Left cardiac atrium (tissue), 4 donors: ENCODE measurements at regions of chr13 and their contacts with region 1.

Region 1: GRCh38 chr13:52128714-52129700 is at the start of gene NEK5:
- DNase-seq: peak; percentile 74
- ATAC-seq: peak; percentile 86 to 93
- total RNA-seq, gene NEK5: 0.44 TPM

Region 2: DNA sequence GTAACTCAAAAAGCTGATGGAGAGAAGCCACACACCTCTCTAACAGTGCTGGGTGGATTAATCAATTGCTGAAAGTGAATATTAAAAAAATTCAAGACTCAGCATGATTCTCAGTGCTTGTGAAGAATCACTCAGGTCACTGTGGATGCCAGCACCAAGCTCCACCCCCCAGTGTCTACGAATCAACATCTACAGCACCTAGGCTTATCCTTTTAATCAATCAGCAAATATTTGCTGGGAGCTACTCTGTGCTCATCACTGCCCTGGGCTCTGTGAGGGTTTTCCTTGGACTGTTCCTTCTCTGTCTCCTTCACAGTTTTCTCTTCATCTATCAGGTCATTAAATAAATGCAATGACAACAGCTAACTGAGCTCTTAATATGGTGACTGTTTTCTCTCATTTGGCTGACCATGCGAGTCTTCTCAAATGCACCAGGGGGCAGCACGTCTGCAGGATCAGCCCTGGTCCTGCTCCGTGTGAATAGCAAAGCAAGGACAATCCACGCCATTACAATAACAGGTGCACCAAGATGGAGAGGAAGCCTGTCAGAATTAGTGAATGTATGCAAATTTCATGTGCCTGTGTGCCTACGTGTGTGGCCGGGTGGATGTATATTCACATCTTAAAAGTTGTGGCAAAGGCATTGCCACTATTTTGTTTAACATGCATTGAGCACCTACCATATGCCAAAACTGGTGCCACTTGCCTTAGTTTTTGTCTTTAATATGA is 1003.3 kb before region 1 on chr13:
- intact Hi-C with region 1: loop called in 1 of 2 experiments (anchors 10 kb)
- DNase-seq: peak; percentile 43
- ATAC-seq: peak; percentile 67 to 75

Region 3: GRCh38 chr13:51814825-51815650 is 314.0 kb before region 1 on chr13:
- intact Hi-C with region 1: loop called in 1 of 2 experiments (anchors 10 kb)
- DNase-seq: peak; percentile 56
- ATAC-seq: peak; percentile 66 to 67

Region 4: DNA sequence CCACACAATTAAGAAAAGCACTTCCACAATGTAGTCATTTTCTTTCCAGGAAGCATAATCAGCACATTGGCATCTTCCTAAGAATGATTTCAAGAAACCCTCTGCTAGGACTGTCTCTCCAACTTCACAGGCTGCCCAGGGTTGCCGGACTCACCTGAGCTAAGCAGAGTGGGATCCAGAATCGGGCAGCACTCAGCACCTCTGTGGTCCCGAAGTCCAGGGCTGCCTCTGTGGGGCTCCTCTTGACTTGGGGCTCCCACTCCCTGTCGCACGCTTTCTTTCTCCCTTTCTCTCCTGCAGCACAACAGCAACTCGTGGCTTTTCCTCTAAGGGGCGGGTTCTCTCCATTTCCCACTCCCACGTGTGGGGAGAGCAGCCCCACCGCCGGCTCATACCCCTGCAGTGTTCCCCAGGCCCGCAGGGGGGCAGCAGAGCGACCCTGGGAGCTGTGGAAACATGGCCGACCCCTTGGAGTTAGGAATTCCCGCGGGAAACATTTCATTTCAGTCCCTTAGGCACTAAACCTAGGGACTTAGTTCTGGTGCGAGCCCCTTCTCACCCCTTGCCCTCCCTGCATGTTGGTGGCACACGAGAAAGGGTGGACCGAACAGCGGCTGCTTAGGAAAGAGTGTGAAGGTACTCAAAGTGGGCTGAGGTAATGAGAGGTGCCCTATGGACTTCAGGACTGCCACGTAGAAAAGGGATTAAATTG is 284.0 kb before region 1 on chr13 and contains the start of gene TMEM272:
- intact Hi-C with region 1: loop called in 1 of 2 experiments (anchors 10 kb)
- DNase-seq: peak; percentile 61
- ATAC-seq: peak; percentile 84 to 90
- total RNA-seq, gene TMEM272: 0.68 to 1.4 TPM

Region 5: DNA sequence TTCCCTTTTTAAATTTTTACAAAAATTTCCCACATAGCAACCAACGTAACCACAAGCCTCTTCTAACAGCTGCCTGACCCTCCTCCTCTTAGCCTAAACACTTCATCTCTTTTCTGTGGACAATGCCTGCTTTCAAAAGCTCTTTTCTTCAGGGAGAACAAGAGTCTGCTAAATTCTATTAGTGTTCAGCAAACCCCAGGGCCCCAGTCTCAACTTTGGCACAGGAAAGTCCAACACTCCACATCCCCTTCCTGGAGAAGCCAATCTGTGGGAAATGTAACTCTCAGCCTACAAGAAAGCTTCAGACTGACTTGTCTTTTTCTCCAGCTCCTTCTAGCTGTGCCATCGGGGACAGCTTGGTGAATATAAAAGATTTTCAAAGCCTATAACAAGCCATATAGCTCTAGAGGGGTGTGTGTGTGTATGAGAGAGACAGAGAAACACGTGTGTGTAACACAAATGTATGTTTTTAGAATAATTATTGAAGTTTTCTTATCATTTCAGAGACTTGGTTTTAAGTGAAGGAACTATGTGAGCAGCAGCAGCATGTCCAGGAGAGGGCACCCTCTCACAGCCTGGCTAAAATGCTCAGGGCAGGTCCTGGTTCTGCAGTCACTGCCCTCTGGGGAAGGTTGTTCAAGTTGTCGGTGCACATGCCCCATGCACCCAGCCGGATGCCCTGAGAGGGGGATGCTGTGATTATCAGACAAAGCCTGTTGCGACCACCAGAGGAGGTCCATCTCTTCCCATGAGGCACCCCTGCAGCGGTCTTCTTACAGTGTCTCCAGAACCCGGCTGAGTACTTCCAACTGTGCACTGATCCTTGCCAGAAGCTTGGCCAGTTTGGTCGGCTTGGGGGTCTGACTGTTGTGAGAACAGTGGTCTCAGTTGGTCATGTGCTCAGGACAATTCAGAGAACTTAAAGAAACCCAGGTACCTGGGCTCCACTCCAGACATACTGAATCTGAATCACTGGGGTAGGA is 232.8 kb before region 1 on chr13:
- intact Hi-C with region 1: loop called (anchors 2 to 10 kb)
- DNase-seq: peak; percentile 48
- ATAC-seq: peak; percentile 85 to 89

Region 6: DNA sequence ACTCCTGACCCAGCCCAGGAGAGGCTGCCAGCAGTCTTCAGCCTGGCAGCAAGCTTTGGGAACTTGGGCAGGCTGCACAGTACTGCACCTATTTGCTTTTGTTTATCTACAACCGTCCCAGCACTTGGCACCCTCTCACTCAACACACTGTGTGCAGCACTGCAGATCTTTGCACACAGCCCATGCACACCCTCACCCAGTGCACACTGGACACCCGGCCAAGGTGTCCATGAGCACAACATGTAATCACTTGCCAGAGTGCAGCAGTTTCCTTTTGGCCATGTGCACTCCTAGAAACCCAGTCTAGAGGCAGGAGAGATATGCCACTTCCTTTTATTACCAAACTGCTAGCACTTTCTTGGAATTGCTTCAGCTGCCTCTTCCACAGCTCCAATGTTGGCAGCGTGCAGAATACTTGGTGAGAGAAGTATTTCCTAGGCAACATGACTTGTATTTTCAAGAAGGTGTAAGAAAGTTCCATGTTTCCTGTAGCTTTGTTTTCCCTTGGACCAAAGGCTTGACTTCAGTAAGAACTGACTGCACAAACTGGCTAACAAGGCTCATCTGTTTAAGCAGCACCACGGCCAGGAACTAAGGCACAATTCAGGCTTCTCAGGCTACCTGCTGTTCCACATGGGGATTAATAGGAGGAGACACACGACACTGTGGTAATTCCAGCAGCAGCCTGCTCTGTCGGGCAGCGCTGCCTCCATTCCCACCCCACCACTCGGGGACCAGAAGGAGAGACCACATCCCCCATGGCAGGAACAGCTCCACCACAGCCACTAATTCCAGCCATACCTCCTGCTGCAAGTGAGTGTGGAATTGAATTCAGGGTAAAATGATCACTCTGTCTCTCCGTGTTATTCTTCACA is 133.1 kb before region 1 on chr13:
- intact Hi-C with region 1: loop called (anchors 5 kb)
- DNase-seq: peak; percentile 25
- ATAC-seq: peak; percentile 76 to 86

Region 7: DNA sequence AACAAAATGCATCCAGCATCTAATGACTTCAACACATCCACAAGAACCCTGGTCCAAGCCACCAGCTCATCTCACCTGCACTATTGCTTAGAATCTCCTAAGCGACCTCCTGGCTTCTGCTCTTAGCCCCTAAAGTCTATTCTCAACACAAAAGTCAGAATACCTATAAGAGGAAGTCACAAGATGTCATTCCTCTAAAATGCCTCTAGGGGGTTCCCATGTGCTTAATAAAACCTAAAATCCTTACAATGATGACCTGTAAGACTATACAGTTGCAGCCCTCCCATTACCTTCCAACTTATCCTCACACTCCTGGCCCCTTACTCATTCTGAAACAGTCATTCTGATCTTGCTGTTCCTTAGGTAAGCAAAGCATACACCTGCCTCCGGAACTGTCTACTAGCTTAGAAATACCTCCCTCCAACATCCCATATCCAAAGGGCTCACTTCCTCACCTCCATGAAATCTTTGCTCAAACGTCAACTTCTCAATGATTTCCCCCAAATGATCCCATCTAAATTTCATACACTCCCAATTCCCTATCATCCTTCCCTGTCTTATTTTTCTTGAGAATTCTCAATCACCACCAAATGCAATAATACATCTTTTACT is 127.8 kb before region 1 on chr13:
- intact Hi-C with region 1: loop called (anchors 5 kb)
- DNase-seq: no peak
- ATAC-seq: peak in 1 of 2 donors; percentile 49

Region 8: GRCh38 chr13:52026246-52026626 is 102.8 kb before region 1 on chr13:
- intact Hi-C with region 1: no loop called
- DNase-seq: no peak
- ATAC-seq: no peak

Region 9: DNA sequence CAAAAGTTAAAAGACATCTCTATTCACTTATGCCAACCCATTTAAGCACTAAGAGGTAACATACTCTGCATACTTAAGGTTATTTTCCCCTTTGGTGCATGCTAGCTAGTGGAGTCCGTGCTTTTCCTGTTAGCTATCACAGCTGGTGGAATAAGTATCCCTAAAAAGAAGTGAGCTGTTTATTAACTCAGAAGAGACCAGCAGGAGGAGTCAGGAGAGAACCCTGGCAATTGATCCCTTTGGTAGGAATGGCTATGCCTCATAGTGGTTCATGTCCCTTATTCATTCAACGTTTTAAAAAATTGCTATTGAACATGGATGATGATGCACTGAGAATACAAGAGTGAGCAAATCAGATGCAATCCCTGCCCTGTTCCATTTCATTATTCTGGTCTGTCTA is 12.3 kb after region 1 on chr13:
- intact Hi-C with region 1: no loop called
- DNase-seq: no peak
- ATAC-seq: no peak